ENCODE measurements at regions of chr20 and their contacts with region 1.

Region 1: DNA sequence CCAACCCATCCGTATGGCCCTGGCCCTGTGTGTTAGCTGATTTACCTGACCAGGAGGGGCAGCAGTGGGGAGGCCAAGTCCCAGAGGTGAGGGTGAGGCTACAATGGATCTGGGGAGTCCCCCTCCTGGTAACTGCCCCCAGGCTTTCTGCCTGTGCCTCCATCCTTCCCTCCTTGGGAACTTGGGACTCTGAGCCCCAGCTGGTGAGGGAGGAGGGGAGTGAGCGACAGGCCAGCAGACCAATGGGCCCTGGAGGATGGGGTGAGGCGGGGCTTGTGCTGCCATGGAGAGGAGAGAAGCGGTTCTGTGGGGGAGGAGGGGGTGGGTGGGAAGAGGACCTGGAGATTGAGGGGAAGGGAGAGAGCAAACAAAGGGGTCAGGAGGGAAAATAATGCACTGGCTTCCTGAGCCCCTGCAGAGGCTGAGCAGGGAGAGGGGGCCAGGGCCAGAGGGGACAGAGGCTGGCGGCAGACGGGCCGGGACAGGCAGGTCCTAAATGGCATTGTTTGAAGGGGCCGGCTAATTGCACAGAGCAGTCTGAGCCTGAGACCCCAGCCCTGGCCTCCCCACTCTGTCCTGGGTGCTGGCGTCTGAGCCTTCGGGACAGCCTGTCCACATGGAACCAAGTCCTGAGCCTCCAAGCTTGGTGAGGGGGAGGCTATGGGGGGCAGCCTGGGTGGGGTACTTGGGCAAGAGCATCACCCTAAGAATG is 17.5 kb downstream of the DNMT3B start:
- DNase-seq: no peak
- ATAC-seq: no peak
- H3K4me3 ChIP-seq: no peak overlapping the region
- H3K4me3 Mint-ChIP-seq: no peak overlapping the region
- H3K27ac ChIP-seq: no peak overlapping the region
- H3K27ac Mint-ChIP-seq: no peak overlapping the region
- H3K4me1 ChIP-seq: no peaks in the 10 kb centered on the region
- H3K4me1 Mint-ChIP-seq: peaks cover 16% of the 10 kb centered on the region
- H3K27me3 ChIP-seq: no peaks in the 10 kb centered on the region
- H3K27me3 Mint-ChIP-seq: no peaks in the 10 kb centered on the region
- CTCF ChIP-seq: no peak

Region 2: GRCh38 chr20:32521780-32522525 is 257.7 kb before region 1 on chr20:
- CTCF ChIA-PET with region 1: interaction called, 4 read pairs
- POLR2A ChIA-PET with region 1: no interaction called
- intact Hi-C with region 1: loop called (anchors 5 to 10 kb)
- DNase-seq: peak in 8 of 9 experiments; percentile 55 to 83 (median 74)
- ATAC-seq: peak; percentile 78
- H3K4me3 ChIP-seq: no peak overlapping the region
- H3K4me3 Mint-ChIP-seq: peak overlapping the region; percentile 54
- H3K27ac ChIP-seq: peak overlapping the region in 1 of 2 experiments; percentile 52
- H3K27ac Mint-ChIP-seq: peak overlapping the region; percentile 92
- H3K4me1 ChIP-seq: peaks cover 66% of the 10 kb centered on the region
- H3K4me1 Mint-ChIP-seq: peaks cover 66% of the 10 kb centered on the region
- H3K27me3 ChIP-seq: no peaks in the 10 kb centered on the region
- H3K27me3 Mint-ChIP-seq: no peaks in the 10 kb centered on the region
- CTCF ChIP-seq: peak; percentile 79

Region 3: GRCh38 chr20:32674362-32674789 is 105.3 kb before region 1 on chr20:
- CTCF ChIA-PET with region 1: interaction called, 305 read pairs
- POLR2A ChIA-PET with region 1: interaction called, 12 read pairs
- intact Hi-C with region 1: loop called in 1 of 2 experiments (anchors 1 kb)
- DNase-seq: peak; percentile 49 to 77 (median 73)
- ATAC-seq: peak; percentile 73
- H3K4me3 ChIP-seq: no peak overlapping the region
- H3K4me3 Mint-ChIP-seq: peak overlapping the region; percentile 9
- H3K27ac ChIP-seq: no peak overlapping the region
- H3K27ac Mint-ChIP-seq: no peak overlapping the region
- H3K4me1 ChIP-seq: peaks cover 16% of the 10 kb centered on the region
- H3K4me1 Mint-ChIP-seq: peaks cover 32% of the 10 kb centered on the region
- H3K27me3 ChIP-seq: no peaks in the 10 kb centered on the region
- H3K27me3 Mint-ChIP-seq: no peaks in the 10 kb centered on the region
- CTCF ChIP-seq: peak; percentile 75

Region 4: DNA sequence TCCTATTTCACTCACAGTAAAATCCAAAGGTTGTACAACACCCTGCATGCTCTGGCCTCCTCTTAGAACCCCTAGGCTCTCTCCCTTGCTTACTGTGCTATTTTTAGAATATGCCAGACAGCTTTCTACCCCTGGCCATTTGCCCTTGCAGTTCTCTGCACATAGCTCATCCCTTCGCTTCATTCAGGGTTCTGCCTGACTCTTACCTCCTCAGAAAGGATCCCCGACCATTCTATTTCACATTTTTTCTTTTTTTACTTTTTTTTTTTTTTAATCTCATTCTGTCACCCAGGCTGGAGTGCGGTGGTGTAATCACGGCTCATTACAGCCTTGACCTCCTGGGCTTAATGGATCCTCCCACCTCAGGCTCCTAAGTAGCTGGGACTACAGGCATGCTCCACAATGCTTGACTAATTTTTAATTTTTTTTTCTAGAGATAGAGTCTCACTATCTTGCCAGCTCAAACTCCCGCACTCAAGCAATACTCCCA is 70.0 kb before region 1 on chr20:
- CTCF ChIA-PET with region 1: interaction called, 14 read pairs
- POLR2A ChIA-PET with region 1: no interaction called
- intact Hi-C with region 1: no loop called
- DNase-seq: no peak
- ATAC-seq: no peak
- H3K4me3 ChIP-seq: no peak overlapping the region
- H3K4me3 Mint-ChIP-seq: no peak overlapping the region
- H3K27ac ChIP-seq: no peak overlapping the region
- H3K27ac Mint-ChIP-seq: peak overlapping the region; percentile 79
- H3K4me1 ChIP-seq: no peaks in the 10 kb centered on the region
- H3K4me1 Mint-ChIP-seq: peaks cover 6% of the 10 kb centered on the region
- H3K27me3 ChIP-seq: no peaks in the 10 kb centered on the region
- H3K27me3 Mint-ChIP-seq: no peaks in the 10 kb centered on the region
- CTCF ChIP-seq: no peak

Region 5: DNA sequence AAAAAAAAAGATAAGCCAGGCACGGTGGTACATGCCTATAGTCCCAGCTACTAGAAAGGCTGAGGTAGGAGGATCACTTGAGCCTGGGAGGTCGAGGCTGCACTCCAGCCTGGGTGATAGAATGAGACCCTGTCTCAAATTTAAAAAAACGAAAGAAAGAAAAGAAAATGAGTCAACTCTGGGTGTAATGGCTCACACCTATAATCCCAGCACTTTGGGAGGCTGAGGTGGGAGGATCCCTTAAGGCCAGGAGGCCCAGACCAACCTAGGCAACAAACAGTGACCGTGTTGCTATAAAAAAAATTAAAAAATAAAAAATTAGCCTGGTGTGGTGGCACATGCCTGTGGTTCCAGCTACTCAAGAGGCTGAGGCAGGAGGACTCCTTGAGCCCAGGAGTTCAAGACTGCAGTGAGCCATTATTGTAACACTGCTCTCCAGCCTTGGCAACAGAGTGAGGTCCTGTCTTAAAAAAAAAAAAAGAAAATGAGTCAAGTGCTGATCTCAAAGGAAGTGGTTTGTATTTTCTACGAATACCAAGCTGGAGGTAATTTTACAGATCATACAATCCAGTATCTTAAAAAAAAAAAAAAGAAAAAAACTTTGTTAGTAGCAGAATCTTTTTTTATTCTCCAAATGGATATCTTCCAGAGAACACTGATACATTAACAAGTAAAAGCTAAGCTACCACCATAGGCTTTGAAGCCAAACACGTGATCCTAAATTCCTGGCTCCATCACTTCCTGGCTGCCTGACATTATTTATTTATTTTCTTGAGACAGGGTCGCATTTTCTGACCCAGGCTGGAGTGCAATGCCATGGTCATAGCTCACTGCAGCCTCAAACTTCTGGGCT is 42.1 kb before region 1 on chr20:
- CTCF ChIA-PET with region 1: interaction called, 52 read pairs
- POLR2A ChIA-PET with region 1: interaction called, 3 read pairs
- intact Hi-C with region 1: loop called in 1 of 2 experiments (anchors 5 kb)
- DNase-seq: peak in 6 of 9 experiments; percentile 20 to 81 (median 48)
- ATAC-seq: peak; percentile 88
- H3K4me3 ChIP-seq: no peak overlapping the region
- H3K4me3 Mint-ChIP-seq: peak overlapping the region; percentile 55
- H3K27ac ChIP-seq: peak overlapping the region; percentile 32 to 79
- H3K27ac Mint-ChIP-seq: peak overlapping the region; percentile 93
- H3K4me1 ChIP-seq: peaks cover 39% of the 10 kb centered on the region
- H3K4me1 Mint-ChIP-seq: peaks cover 51% of the 10 kb centered on the region
- H3K27me3 ChIP-seq: no peaks in the 10 kb centered on the region
- H3K27me3 Mint-ChIP-seq: no peaks in the 10 kb centered on the region
- CTCF ChIP-seq: no peak

Region 6: GRCh38 chr20:32743237-32744112 is 36.2 kb before region 1 on chr20 and contains the start of gene COMMD7:
- CTCF ChIA-PET with region 1: interaction called, 52 read pairs
- POLR2A ChIA-PET with region 1: no interaction called
- intact Hi-C with region 1: loop called in 1 of 2 experiments (anchors 5 kb)
- DNase-seq: peak; percentile 33 to 80 (median 65)
- ATAC-seq: peak; percentile 80
- H3K4me3 ChIP-seq: peak within 1 kb of the TSS; percentile 74 to 76
- H3K4me3 Mint-ChIP-seq: peak within 1 kb of the TSS; percentile 93
- H3K27ac ChIP-seq: peak within 1 kb of the TSS; percentile 79 to 91
- H3K27ac Mint-ChIP-seq: peak within 1 kb of the TSS; percentile 96
- H3K4me1 ChIP-seq: peaks cover 20% of the 10 kb centered on the region
- H3K4me1 Mint-ChIP-seq: peaks cover 38% of the 10 kb centered on the region
- H3K27me3 ChIP-seq: no peaks in the 10 kb centered on the region
- H3K27me3 Mint-ChIP-seq: no peaks in the 10 kb centered on the region
- CTCF ChIP-seq: no peak
- total RNA-seq, gene COMMD7: 25.5 to 26.7 TPM

Region 7: DNA sequence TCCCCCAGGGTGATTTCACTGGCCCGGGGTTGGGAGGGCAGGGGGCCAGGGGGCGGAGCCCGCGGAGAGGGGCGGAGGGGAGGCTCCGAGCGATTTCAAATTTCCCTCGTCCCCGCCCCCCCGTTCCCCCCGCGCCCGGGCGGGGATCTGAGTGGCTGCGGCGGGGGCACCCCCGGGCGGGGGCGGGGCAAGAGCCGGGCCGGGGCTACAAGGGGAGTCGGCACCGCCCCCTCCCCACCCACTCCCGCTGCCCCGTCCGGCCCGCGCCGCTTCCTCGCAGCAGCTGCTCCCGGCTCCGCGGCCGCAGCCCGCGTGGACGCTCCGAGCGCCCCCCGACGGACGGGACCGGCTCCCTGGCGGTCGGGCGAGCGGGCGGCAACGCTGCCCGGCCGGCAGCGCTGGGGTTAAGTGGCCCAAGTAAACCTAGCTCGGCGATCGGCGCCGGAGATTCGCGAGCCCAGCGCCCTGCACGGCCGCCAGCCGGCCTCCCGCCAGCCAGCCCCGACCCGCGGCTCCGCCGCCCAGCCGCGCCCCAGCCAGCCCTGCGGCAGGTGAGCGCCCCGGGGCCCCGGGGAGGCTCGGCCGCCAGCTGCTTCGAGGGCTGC is 17.4 kb before region 1 on chr20 and contains the start of gene DNMT3B:
- CTCF ChIA-PET with region 1: interaction called, 26 read pairs
- POLR2A ChIA-PET with region 1: no interaction called
- intact Hi-C with region 1: no loop called
- DNase-seq: peak; percentile 47 to 79 (median 73)
- ATAC-seq: peak; percentile 89
- H3K4me3 ChIP-seq: peak within 1 kb of the TSS; percentile 62 to 65
- H3K4me3 Mint-ChIP-seq: peak within 1 kb of the TSS; percentile 87
- H3K27ac ChIP-seq: no peak within 1 kb of the TSS
- H3K27ac Mint-ChIP-seq: no peak within 1 kb of the TSS
- H3K4me1 ChIP-seq: peaks cover 14% of the 10 kb centered on the region
- H3K4me1 Mint-ChIP-seq: peaks cover 16% of the 10 kb centered on the region
- H3K27me3 ChIP-seq: no peaks in the 10 kb centered on the region
- H3K27me3 Mint-ChIP-seq: no peaks in the 10 kb centered on the region
- CTCF ChIP-seq: no peak
- total RNA-seq, gene DNMT3B: 0.30 to 0.36 TPM